Panc1 (cell line): ENCODE measurements at regions of chr11 and their contacts with region 1.

Region 1: GRCh38 chr11:335779-336658 is 15.4 kb upstream of the IFITM3 start:
- DNase-seq: no peak
- ATAC-seq: peak; percentile 59
- H3K4me3 ChIP-seq: no peak overlapping the region
- H3K27ac ChIP-seq: peak overlapping the region; percentile 9; the same call in 1 of the 2 replicates
- H3K4me1 ChIP-seq: peaks cover 4% of the 10 kb centered on the region; the same call in 1 of the 2 replicates
- H3K27me3 ChIP-seq: no peaks in the 10 kb centered on the region
- CTCF ChIP-seq: no peak

Region 2: GRCh38 chr11:346529-346928 is 10.5 kb after region 1 on chr11:
- CTCF ChIA-PET with region 1: no interaction called
- POLR2A ChIA-PET with region 1: interaction called, 11 read pairs
- in situ Hi-C with region 1: no loop called
- intact Hi-C with region 1: no loop called
- DNase-seq: no peak
- ATAC-seq: no peak
- H3K4me3 ChIP-seq: no peak overlapping the region
- H3K27ac ChIP-seq: no peak overlapping the region
- H3K4me1 ChIP-seq: peaks cover 11% of the 10 kb centered on the region
- H3K27me3 ChIP-seq: no peaks in the 10 kb centered on the region
- CTCF ChIP-seq: no peak

Region 3: DNA sequence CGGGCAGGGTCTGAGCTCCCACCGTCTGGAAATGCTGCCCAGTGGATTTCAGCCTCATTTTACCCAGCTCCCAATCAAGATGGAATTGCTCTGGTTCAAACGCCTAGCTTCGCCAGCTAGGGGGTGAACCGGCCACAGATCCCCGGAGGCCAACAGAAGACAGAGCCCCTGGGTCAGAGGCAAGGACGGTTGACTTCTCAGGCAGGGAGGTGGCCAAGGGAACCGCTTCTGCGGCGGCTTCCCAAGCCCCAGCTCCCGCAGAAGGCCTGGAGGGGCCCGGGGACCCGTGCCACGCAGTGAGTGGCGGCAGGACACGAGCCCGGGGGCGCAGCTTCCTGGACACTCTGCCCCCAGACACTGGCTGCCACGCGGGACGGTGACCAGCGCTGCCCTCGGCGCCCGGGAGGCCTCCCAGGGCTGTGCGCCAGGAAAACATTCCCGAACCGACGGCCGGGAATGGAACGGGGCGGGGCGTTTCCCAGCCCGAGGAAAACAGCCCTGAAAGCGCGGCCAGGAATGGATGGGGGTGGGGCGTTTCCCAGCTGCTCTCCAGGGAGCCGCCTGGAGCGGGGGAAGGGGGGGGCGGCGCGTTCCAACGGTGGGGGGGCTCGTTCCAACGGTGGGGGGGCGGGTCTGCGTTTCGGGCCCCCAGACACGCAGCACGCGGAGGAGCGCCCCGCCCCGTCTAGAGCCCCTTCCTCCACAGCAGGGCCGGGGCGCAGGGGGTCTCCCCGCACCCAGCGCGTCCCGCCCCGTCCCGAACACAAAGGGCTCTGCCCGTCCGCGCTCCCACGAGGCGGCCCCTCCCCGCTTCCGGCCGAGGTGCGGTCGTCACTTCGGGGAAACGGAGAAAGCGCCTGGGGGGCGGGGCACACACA is 19.8 kb after region 1 on chr11:
- CTCF ChIA-PET with region 1: no interaction called
- POLR2A ChIA-PET with region 1: interaction called, 11 read pairs
- in situ Hi-C with region 1: no loop called
- intact Hi-C with region 1: no loop called
- DNase-seq: peak; percentile 51
- ATAC-seq: peak; percentile 91
- H3K4me3 ChIP-seq: peak overlapping the region; percentile 24 to 42
- H3K27ac ChIP-seq: peak overlapping the region; percentile 99
- H3K4me1 ChIP-seq: peaks cover 35% of the 10 kb centered on the region
- H3K27me3 ChIP-seq: no peaks in the 10 kb centered on the region
- CTCF ChIP-seq: no peak